ENCODE measurements at regions of chrX and their contacts with region 1.

Region 1: GRCh38 chrX:119887721-119888425 is 7.8 kb upstream of the AKAP14 start:
- DNase-seq: peak; percentile 72
- ATAC-seq: peak; percentile 72
- H3K4me3 Mint-ChIP-seq: peak overlapping the region; percentile 58
- H3K27ac Mint-ChIP-seq: no peak overlapping the region
- H3K4me1 Mint-ChIP-seq: peaks cover 15% of the 10 kb centered on the region
- H3K27me3 Mint-ChIP-seq: no peaks in the 10 kb centered on the region

Region 2: GRCh38 chrX:119791438-119792231 is 96.2 kb before region 1 on chrX and contains the start of gene RPL39:
- CTCF ChIA-PET with region 1: interaction called, 12 read pairs
- DNase-seq: peak; percentile 89
- ATAC-seq: peak; percentile 90
- H3K4me3 Mint-ChIP-seq: peak within 1 kb of the TSS; percentile 95
- H3K27ac Mint-ChIP-seq: peak within 1 kb of the TSS; percentile 96
- H3K4me1 Mint-ChIP-seq: peaks cover 36% of the 10 kb centered on the region
- H3K27me3 Mint-ChIP-seq: no peaks in the 10 kb centered on the region
- total RNA-seq, gene RPL39: 1,797 to 1,809 TPM

Region 3: DNA sequence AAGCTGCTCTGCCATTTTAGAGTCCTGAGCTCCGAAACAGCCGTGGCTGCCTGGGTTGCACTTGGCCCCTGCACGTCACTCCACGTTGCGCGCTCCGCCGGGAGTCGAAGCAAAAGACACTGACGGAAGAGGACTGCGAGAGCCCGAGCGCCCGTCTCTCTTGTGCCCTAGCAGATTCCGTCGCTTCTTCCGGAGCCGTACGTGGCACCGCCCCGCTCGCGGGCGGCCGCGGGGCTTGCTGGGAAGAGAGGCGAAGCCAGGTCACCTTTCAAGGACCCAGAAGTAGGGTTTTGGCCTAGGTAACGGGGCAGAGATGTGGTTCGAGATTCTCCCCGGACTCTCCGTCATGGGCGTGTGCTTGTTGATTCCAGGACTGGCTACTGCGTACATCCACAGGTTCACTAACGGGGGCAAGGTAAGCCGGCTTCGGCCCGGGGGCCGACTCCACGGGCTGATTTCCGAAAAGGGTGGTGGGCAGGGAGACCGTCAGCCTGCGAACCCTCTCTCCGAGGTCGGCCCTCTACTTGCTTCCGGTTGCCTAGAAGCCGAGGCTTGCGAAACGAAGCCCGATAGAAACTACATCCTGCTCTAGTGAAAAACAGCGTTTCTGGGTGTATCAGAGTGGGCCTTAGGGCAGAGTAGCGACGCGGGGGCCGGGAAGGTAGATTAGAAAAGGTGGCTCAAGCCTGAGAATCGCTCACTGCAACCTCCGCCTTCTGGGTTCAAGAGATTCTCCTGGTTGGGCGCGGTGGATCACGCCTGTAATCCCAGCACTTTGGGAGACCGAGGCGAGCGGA is 16.1 kb before region 1 on chrX and contains the starts of genes NDUFA1 and RNF113A:
- CTCF ChIA-PET with region 1: interaction called, 10 read pairs
- DNase-seq: peak; percentile 92
- ATAC-seq: peak; percentile 95
- H3K4me3 Mint-ChIP-seq: peak within 1 kb of the TSS; percentile 100
- H3K27ac Mint-ChIP-seq: peak within 1 kb of the TSS; percentile 100
- H3K4me1 Mint-ChIP-seq: peaks cover 14% of the 10 kb centered on the region
- H3K27me3 Mint-ChIP-seq: no peaks in the 10 kb centered on the region
- total RNA-seq, gene NDUFA1: 93.2 to 102 TPM
- total RNA-seq, gene RNF113A: 32.2 to 32.5 TPM

Region 4: DNA sequence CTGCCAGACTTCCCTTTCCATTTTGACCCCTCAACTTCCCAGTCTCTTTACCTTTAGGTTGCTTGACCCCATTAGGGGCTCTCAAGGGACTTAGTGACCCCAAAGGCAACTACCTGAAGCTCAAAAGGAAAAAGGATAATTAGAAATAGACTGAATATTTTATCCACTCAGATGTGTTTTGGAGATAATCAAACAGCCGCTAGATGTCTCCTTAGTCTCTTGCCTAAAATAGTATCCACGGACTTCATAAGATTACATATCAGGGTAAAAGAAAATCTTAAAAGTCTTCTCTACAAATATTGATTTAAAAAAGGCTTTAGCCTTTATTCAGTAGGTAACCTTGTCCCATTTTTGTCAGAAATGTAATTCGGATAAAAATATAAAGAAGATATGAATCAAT is 249.6 kb after region 1 on chrX:
- CTCF ChIA-PET with region 1: no interaction called
- DNase-seq: no peak
- ATAC-seq: no peak
- H3K4me3 Mint-ChIP-seq: no peak overlapping the region
- H3K27ac Mint-ChIP-seq: no peak overlapping the region
- H3K4me1 Mint-ChIP-seq: peaks cover 9% of the 10 kb centered on the region
- H3K27me3 Mint-ChIP-seq: no peaks in the 10 kb centered on the region

Measured in activated CD8-positive, alpha-beta memory T cell treated with anti-CD3 and anti-CD28 coated beads, Interleukin-2, amount 10 ng/mL, durations not matched to agents 7 days and 5 days (primary cell).